Activated CD4-positive, alpha-beta memory T cell treated with anti-CD3 and anti-CD28 coated beads, Interleukin-2, amount 10 ng/mL, durations not matched to agents 7 days and 5 days (primary cell): ENCODE measurements at regions of chrX and their contacts with region 1.

Region 1: DNA sequence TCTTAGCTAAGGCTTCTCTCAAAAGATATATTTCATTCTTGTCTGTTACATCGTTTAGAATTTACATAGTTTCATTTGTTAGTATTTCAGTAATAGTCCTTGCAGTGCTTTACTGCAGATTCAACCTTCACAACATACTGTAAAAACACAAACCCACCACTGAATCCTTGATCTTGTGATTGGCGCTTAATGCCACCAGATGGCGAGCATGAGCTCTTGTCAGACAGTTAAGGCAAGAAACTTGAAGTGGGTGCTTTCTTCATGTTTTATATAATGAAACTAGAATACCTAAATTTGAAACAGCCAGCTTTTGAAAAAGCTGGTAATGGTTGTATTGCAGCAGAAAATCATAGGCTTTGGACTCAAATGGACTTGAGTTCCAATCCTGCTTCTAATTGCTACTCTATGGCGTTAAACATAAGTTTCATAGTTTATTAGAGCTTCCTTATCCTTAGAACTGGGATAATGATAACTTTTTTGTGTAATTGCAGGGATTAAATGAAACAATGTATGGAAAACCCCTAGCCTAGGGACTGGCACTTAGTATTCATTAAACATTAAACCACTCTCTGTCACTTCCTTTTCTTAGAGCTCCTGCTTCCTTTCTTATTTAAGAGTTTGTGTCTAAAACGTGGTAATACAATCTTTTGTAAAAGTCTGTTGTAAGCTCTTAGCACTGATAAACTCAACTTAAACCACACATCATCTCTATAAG is 95.1 kb downstream of the USP9X start:
- DNase-seq: peak; percentile 48
- H3K4me3 Mint-ChIP-seq: no peak overlapping the region
- H3K27ac Mint-ChIP-seq: peak overlapping the region; percentile 70
- H3K4me1 Mint-ChIP-seq: peaks cover 43% of the 10 kb centered on the region
- H3K27me3 Mint-ChIP-seq: no peaks in the 10 kb centered on the region

Region 2: GRCh38 chrX:41116948-41117347 is 63.4 kb before region 1 on chrX:
- CTCF ChIA-PET with region 1: no interaction called
- POLR2A ChIA-PET with region 1: no interaction called
- DNase-seq: no peak
- H3K4me3 Mint-ChIP-seq: peak overlapping the region; percentile 66
- H3K27ac Mint-ChIP-seq: peak overlapping the region; percentile 72
- H3K4me1 Mint-ChIP-seq: peaks cover 66% of the 10 kb centered on the region
- H3K27me3 Mint-ChIP-seq: no peaks in the 10 kb centered on the region

Region 3: GRCh38 chrX:41164449-41164848 is 15.9 kb before region 1 on chrX:
- CTCF ChIA-PET with region 1: interaction called, 14 read pairs
- POLR2A ChIA-PET with region 1: interaction called, 3 read pairs
- DNase-seq: no peak
- H3K4me3 Mint-ChIP-seq: no peak overlapping the region
- H3K27ac Mint-ChIP-seq: no peak overlapping the region
- H3K4me1 Mint-ChIP-seq: peaks cover 2% of the 10 kb centered on the region
- H3K27me3 Mint-ChIP-seq: no peaks in the 10 kb centered on the region

Region 4: GRCh38 chrX:41259516-41259915 is 79.2 kb after region 1 on chrX:
- CTCF ChIA-PET with region 1: interaction called, 28 read pairs
- POLR2A ChIA-PET with region 1: no interaction called
- DNase-seq: no peak
- H3K4me3 Mint-ChIP-seq: no peak overlapping the region
- H3K27ac Mint-ChIP-seq: no peak overlapping the region
- H3K4me1 Mint-ChIP-seq: peaks cover 2% of the 10 kb centered on the region
- H3K27me3 Mint-ChIP-seq: no peaks in the 10 kb centered on the region